ENCODE measurements at regions of chr12 and their contacts with region 1.

Region 1: GRCh38 chr12:42568952-42569915 is 20.3 kb downstream of the PRICKLE1 start:
- DNase-seq: peak; percentile 76
- H3K4me3 ChIP-seq: no peak overlapping the region
- H3K27ac ChIP-seq: no peak overlapping the region
- H3K4me1 ChIP-seq: peaks cover 33% of the 10 kb centered on the region
- H3K27me3 ChIP-seq: no peaks in the 10 kb centered on the region

Region 2: DNA sequence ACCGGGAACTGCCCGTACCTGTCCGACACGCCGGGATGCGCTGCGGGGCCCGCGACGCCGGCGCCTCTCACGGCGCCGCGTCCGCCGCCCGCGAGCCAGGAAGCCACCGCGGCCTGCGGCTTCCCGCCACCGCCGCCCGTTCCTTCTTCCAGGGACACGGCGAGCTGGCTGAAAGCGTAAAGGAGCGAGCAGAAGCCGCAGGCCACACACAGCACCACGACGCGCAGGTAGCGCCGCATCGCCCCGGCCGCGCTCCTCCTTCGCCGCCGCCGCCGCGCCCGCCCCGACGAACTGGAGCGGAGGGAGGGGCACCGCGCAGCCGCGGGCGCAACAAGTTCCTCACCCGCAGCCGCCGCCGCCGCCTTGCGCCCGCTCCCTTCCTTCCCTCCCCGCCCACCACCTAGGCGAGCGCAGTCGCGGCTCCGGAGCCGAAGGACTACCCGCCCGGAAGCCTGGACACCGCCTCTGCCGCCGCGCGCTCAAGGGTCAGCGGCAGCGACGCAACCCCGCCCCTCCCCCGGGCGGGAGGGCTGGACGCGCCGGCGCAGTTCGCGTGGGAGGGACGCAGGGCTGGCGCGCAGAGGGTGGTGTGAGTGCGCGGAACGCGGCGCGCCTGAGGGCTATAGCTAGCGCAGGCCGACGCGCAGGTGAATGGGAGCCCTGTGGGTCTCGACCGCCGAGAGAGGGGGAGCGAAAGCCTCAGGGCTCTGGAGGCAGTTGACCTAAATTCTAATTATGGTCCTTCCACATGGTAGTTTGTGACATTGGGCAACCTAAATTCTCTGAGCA is 424.6 kb before region 1 on chr12 and contains the start of gene GXYLT1:
- in situ Hi-C with region 1: loop called (anchors 25 kb)
- DNase-seq: peak; percentile 97
- H3K4me3 ChIP-seq: peak within 1 kb of the TSS; percentile 82
- H3K27ac ChIP-seq: peak within 1 kb of the TSS; percentile 23; the same call in 1 of the 2 replicates
- H3K4me1 ChIP-seq: peaks cover 29% of the 10 kb centered on the region
- H3K27me3 ChIP-seq: no peaks in the 10 kb centered on the region
- total RNA-seq, gene GXYLT1: 14.6 and 16.6 TPM in 2 replicates

Region 3: DNA sequence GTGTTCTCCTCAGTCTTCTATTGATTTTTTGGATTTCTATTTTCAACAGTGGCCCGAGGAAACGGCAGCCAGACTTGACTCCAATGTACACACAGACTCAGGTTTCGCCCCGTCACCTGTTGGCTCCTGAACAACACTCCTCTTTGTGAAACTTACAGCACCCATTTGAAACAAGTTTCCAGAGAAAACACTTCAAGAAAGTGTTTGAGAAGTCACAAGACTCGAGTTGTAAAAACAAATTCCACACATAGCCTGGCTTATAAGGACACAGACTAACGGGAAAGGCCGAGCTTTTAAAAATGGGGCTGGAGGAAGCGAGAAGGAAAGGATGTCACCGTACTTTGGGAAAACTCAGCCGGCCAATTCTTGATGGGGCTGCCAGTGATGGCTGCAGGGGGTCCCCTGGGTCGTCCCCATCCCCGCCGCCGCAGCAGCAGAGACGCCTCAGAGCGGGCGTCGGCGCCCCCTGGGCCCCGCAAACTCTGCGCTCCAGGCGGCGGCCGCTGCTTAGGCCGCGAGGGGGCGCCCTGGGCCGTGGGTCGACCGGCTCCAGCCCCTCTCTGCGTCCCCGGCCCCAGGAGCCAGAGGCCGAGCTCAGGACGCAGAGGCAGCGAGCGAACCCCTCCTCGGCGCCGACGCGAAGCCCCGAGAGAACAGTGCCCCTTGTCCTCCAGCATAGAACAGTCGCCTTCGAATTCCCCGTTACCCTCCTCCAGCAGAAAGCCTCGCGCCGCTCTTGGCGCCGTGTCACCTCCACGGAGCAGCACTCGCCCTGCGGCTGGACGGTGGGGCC is 86.6 kb before region 1 on chr12:
- in situ Hi-C with region 1: loop called (anchors 10 kb)
- DNase-seq: peak; percentile 82
- H3K4me3 ChIP-seq: peak overlapping the region; percentile 89
- H3K27ac ChIP-seq: peak overlapping the region; percentile 44
- H3K4me1 ChIP-seq: peaks cover 39% of the 10 kb centered on the region
- H3K27me3 ChIP-seq: no peaks in the 10 kb centered on the region

Region 4: DNA sequence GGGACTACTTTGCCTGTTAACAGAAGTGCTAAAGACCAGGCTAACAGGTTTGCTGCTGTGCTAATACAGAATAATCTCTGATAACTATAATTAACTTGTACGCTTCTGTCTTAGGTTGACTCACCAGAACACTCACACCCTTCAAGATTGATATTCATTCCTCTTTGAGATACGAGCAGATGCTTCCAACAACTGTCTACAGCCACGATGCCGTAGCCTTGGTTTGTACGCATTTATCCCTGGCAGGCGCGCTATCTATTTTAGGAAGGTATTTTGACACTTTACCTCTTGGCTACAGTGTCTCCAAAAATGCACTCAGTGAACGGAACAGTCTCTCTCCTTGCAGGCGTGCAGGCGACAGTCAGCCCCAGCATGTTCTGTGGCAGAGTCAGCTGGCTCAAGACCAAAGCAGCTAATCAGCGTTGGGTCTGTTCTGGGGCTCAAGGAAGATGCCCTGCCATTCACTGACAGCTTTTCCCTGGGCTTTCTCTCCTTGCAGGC is 166.7 kb after region 1 on chr12:
- in situ Hi-C with region 1: no loop called
- DNase-seq: peak; percentile 39
- H3K4me3 ChIP-seq: no peak overlapping the region
- H3K27ac ChIP-seq: no peak overlapping the region
- H3K4me1 ChIP-seq: no peaks in the 10 kb centered on the region; the same call in 1 of the 2 replicates
- H3K27me3 ChIP-seq: 0 out of 2 replicates have a peak, but pooled peaks cover 6% of the 10 kb centered on the region